Mammary epithelial cell (primary cell): ENCODE measurements at regions of chr10 and their contacts with region 1.

Region 1: DNA sequence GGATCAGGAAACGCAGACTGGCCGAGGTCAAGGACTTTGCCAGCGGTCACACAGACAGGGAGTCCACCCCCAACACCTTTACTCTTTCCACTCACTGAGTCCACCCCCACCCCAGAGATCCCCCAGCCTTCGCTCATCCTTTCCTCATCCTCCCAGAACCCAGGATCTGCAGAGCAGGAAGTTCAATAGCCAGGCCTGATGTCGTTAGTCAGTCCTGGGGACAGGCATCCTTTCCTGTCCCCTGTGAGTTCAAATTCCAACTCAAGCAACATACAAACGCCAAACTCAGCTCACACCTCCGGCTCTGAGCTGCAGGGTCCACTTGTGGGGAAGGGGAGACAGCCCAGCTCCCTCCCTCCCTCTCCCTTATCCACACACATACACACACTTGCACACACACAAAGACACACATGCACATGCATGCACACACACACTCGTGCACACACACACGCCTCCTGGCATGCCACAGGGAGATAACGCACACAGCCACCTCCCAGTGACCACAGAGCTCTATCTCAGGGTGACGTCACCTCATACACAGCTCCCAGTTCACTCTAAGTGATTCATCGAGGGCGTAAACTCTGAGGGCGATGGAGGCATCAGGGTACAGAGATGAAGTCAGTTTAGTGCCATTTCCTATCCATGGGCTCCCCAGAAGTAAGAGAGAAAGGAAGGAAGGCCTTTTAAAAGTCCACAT is 23.9 kb downstream of the CALML3 start:
- DNase-seq: peak; percentile 98
- H3K4me3 ChIP-seq: no peak overlapping the region
- H3K27ac ChIP-seq: peak overlapping the region; percentile 100
- H3K4me1 ChIP-seq: peaks cover 89% of the 10 kb centered on the region
- H3K27me3 ChIP-seq: no peaks in the 10 kb centered on the region
- CTCF ChIP-seq: no peak

Region 2: DNA sequence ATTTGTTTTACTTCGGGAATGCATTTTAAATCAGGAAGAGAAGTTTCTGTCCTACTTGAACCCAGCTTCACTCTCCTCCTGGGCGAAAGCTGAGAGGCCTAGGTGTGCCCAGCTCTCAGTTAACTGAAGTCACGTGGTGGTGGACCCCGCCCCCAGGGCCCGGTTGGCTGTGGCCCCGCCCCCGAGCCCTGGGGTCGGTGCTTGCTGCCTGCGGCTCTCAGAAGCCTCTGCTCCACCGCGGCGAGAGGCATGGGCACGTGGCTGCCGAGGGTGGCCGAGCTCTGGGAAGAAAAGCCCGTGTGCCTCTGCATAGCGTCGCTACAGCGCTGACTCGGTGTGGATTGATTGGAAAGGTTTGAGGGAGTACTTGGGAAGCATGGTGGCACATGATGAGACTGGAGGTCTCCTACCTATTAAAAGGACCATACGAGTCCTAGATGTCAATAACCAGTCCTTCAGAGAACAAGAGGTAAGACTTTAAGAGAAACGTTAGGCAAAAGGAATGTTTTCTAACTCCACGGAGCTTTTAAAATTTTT is 102.2 kb before region 1 on chr10:
- CTCF ChIA-PET with region 1: no interaction called
- dilution Hi-C with region 1: loop called (anchors 5 kb)
- in situ Hi-C with region 1: no loop called
- intact Hi-C with region 1: loop called (anchors 2 kb)
- DNase-seq: peak; percentile 95
- H3K4me3 ChIP-seq: no peak overlapping the region
- H3K27ac ChIP-seq: no peak overlapping the region
- H3K4me1 ChIP-seq: peaks cover 27% of the 10 kb centered on the region
- H3K27me3 ChIP-seq: no peaks in the 10 kb centered on the region
- CTCF ChIP-seq: no peak

Region 3: DNA sequence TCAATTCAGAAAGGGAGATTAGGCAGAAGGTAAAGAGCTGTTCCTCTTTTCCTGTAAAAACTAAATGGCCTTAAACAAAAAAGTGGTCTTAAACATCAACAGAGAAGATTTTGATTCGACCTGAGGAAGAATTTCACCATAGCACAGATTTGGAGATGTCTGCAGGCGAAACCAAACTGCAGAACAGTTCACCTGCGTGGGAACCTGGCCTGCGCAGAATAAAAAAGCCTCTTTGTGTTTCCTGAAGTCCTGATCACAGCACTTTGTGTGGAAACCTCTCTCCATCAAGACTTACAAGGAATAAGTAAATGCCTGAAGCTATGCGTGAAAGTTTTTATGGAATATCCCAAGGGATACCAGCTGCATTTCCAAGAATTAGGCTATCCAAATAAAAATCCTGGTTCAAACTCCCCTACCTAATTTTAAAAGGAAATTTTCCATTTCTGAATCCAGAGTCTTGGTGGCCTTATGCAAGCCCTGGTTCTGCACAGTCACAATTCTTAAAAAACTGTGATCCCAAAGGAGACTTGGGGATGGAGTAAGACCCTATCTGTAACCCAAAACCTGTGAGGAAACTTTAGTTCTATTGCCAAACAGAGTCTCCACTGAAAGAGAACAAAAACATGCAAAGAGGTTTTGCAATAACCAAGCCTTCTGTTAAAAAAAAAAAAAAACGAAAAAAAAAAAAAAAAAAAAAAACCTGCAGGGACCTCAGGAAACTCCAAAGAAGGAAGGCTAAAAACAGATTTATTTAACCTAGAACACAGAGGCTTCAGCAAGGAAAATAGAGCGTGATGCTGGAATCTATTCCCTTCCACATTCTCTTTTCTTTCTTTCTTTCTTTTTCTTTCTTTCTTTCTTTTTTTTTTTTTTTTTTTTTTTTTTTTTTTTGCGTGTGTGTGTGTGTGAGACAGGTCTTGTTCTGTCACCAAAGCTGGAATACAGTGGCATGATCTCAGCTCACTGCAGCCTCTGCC is 13.5 kb before region 1 on chr10:
- CTCF ChIA-PET with region 1: interaction called, 4 read pairs
- dilution Hi-C with region 1: no loop called
- in situ Hi-C with region 1: no loop called
- intact Hi-C with region 1: loop called (anchors 2 kb)
- DNase-seq: peak; percentile 63
- H3K4me3 ChIP-seq: no peak overlapping the region
- H3K27ac ChIP-seq: peak overlapping the region; percentile 93
- H3K4me1 ChIP-seq: peaks cover 44% of the 10 kb centered on the region
- H3K27me3 ChIP-seq: no peaks in the 10 kb centered on the region
- CTCF ChIP-seq: no peak

Region 4: DNA sequence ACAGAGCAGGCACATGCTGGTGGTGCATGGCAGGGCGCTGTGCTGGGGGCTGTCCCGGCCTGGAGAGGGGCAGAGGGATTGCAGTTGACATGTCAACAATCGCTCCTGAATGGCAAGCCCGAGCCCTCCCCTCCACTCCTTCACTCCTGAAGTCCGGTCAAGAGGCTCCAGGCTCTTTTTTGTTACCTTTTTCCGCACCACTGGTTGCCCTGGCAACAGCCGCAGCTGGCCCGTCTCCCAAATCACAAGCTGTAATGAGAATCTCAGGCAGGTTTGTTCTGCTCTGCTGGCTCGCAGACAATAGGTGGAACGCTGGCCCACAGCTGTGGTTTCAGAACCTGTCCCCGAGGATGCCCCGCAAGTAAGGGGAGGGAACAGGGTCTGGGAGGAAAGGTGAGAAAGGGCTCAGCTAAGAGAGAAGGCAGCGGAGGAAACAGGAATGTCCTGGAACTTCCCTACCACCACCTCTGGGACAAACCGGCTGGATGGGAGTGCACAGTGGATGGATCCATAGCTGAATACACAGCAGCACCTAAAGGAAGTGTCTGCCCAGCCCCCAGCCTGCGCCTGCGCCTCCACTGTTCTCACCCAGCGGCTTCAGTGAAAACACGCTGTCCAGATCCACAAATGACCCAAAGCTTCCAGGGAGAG is 35.0 kb after region 1 on chr10:
- CTCF ChIA-PET with region 1: no interaction called
- dilution Hi-C with region 1: no loop called
- in situ Hi-C with region 1: no loop called
- intact Hi-C with region 1: loop called (anchors 1 kb)
- DNase-seq: peak; percentile 98
- H3K4me3 ChIP-seq: peak overlapping the region in 2 of 3 experiments; percentile 4 to 32
- H3K27ac ChIP-seq: peak overlapping the region; percentile 100
- H3K4me1 ChIP-seq: peaks cover 34% of the 10 kb centered on the region
- H3K27me3 ChIP-seq: no peaks in the 10 kb centered on the region
- CTCF ChIP-seq: peak in 1 of 2 donors; percentile 12

Region 5: DNA sequence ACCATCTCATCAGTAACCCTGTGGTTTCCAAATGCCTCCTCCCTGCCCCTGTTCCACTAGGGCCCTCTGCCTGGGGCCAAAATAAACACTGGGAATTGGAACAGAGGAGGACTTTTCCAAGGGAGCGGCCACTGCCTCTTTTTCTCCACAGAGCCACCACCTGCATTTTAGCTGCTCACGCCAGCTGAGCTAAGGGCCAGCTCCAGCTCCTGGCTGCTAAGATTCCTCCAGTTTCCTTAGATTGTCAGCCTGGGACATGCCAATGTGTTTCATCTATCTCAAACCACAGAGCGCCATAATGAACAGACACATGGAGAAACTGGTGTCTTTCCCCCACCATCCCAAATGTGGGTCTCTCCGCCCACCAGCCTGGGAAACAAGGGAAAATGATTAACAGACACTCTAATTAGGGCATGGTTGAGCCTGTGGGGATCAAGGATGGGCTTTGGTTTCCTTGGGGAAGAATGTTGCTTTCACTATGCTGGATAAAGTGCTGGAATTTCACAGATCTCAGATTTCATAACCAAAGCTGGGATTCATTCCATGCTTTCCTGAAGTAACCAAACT is 65.6 kb after region 1 on chr10:
- CTCF ChIA-PET with region 1: no interaction called
- dilution Hi-C with region 1: no loop called
- in situ Hi-C with region 1: loop called in 1 of 2 experiments (anchors 5 kb)
- intact Hi-C with region 1: loop called (anchors 2 kb)
- DNase-seq: no peak
- H3K4me3 ChIP-seq: no peak overlapping the region
- H3K27ac ChIP-seq: peak overlapping the region; percentile 46
- H3K4me1 ChIP-seq: peaks cover 71% of the 10 kb centered on the region
- H3K27me3 ChIP-seq: no peaks in the 10 kb centered on the region
- CTCF ChIP-seq: no peak